ENCODE measurements at regions of chrX and their contacts with region 1.

Region 1: DNA sequence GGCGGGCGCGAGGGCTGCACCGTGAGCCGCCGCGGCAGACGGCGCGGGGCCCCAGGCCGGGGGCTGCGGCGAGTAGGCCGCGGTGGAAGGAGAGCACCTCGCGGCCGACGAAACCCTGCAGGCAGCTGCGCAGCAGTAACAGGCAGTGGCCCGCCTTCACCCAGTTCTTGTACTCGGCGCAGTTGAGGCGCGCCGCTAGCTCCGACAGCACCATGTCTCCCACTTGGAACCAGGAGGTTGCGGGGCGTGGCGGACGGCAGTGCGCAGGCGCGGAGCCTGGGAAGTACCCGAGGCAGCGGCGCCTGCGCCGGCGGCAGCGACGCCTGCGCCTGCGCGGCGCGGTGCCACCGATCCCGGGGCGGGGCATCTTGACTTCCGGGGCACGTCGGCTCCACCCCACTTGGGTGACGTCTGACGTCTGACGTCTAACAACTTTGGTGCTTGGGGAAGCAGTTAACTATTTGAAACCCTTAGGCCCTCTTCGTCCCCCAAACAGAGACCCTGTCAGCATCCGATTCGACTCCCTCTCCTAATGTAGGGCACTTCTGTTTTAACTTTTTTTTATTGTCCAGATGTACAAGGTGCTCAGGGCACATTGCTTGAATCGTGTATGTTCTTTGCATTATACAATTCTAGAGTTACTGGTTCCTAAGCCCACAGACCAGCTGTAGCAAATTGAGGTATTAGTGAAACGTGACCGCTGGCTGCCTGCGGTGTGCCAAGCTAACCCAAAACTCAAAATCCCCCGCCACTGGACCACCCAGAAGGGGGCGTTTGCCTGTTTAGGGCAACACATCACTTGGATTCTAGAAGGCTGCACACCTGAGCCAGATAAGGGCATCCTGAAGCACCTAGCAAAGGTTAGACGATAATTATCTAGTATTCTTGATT is at the start of gene CXorf38:
- DNase-seq: no peak
- H3K4me3 ChIP-seq: peak within 1 kb of the TSS; percentile 68
- CTCF ChIP-seq: no peak

Region 2: DNA sequence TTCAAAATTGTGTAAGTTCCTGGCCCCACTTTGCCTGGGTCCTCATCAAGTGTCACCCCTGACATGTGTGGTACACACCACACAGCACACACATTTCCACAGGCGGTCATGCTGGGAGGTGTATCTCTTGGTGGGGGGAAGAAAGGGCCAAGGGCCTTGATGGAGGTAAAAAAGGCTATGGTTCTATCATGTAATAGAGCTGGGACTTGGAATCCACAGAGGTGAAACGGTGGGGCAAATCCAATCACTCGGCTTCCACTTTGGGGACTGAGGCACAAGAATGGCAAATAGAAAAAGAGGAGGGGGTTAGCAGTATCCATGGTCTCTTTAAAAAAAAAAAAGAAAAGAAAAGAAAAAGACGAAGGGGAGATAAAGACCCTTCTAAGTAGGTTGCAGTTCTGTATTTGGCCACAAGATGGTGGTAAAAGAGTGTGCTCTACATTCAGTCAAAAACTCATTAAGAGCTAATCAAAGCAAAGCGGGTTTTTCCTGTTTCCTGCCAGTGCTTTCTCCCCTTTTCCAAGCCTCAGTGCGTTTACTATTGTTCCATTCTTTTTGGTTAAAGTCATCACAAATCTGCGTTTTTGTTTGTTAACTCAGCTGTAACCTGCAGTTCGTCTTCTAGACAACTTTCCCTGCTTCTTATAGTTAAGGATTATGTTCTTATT is 103.8 kb before region 1 on chrX:
- CTCF ChIA-PET with region 1: interaction called, 17 read pairs
- POLR2A ChIA-PET with region 1: no interaction called
- DNase-seq: no peak
- H3K4me3 ChIP-seq: no peak overlapping the region
- CTCF ChIP-seq: peak; percentile 25

Region 3: GRCh38 chrX:40663880-40664633 is 16.5 kb after region 1 on chrX:
- CTCF ChIA-PET with region 1: interaction called, 42 read pairs
- POLR2A ChIA-PET with region 1: no interaction called
- DNase-seq: no peak
- H3K4me3 ChIP-seq: no peak overlapping the region
- CTCF ChIP-seq: peak; percentile 24

Region 4: GRCh38 chrX:40792433-40792832 is 144.9 kb after region 1 on chrX:
- CTCF ChIA-PET with region 1: interaction called, 34 read pairs
- POLR2A ChIA-PET with region 1: no interaction called
- DNase-seq: no peak
- H3K4me3 ChIP-seq: no peak overlapping the region
- CTCF ChIP-seq: no peak